HepG2 (cell line): ENCODE measurements at regions of chr5 and their contacts with region 1.

Region 1: DNA sequence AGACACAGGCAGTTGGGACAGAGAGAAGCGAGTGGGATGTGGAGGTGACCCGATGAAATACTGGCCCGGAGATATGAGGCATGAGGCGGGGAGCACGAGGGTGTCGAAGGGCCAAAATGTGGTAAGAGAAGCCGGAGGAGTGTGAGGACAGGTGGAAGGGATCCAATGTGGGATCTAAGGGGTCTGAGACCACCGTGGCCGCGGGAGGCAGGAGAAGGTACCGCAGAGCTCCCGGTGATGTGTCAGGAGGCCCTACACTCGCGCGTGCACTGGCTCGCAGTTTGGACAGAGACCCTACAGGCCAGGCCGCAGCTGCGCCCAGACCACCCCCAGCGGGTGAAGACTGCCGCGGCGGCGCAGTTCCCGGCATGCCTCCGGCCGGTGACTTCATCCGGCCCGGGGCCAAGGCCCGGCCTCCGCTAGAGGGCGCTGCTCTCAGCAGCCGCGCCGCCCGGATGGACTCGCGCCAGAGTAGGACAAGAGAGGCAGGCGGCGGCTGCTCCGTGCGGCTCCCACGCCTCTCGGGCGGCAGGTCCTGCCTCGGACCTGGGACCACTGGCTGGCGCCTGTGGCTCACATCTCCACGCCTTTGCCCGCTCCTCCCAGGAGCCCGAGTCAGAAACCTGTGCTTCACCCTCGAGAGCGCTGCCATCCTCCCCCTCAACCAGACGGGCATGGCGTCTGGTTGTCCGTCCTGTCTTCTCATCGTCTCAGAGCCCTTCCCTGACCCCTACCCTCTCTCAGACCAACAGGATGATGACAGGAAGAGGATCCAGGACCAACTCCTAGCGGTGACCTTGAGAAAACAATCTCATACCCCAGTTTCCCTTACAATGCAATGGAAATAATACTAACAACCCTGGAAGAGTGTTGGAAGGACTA is 35.4 kb upstream of the STING1 start:
- DNase-seq: peak; percentile 80
- ATAC-seq: peak; percentile 91
- H3K4me3 ChIP-seq: peak overlapping the region; percentile 54 to 77 (median 59)
- H3K27ac ChIP-seq: peak overlapping the region; percentile 71
- H3K4me1 ChIP-seq: peaks cover 54% of the 10 kb centered on the region
- H3K27me3 ChIP-seq: no peaks in the 10 kb centered on the region; a peak in 1 of 5 replicates
- CTCF ChIP-seq: peak; percentile 96
- EP300 ChIP-seq: no peak
- POLR2A ChIP-seq: peak; percentile 83 to 89
- RAD21 ChIP-seq: peak; percentile 92

Region 2: DNA sequence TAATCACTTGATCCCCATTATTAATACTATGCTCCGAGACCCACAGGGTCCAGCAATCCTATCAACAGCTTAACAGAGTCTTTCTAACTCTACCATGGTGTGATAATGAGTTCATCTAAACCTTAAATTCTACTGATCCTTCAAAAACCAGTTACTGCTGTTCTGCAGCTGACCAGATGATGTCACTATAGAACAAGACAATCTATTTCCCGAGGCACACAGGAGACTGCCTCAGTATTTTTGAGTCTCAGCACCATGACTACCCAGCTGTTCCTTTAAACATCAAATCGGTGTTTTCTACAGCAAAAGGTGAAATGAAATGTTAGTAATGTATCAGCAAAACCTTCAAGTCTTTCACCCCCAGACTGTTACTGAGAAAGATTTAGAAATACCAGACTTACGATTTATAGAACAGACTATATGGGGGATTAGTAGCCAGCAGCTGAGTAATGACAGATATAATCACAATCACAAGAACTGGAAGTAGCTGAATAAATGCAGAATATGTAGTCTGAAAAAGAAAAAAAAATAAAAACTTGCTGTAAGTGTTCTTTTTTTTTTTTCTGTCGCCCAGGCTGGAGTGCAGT is 95.5 kb before region 1 on chr5:
- CTCF ChIA-PET with region 1: interaction called, 60 read pairs
- POLR2A ChIA-PET with region 1: interaction called, 7 read pairs
- in situ Hi-C with region 1: loop called (anchors 5 kb)
- intact Hi-C with region 1: loop called (anchors 1 kb)
- DNase-seq: peak; percentile 66
- ATAC-seq: peak; percentile 82
- H3K4me3 ChIP-seq: no peak overlapping the region
- H3K27ac ChIP-seq: no peak overlapping the region
- H3K4me1 ChIP-seq: peaks cover 16% of the 10 kb centered on the region
- H3K27me3 ChIP-seq: no peaks in the 10 kb centered on the region
- CTCF ChIP-seq: peak; percentile 89
- EP300 ChIP-seq: no peak
- POLR2A ChIP-seq: no peak
- RAD21 ChIP-seq: peak; percentile 81

Region 3: DNA sequence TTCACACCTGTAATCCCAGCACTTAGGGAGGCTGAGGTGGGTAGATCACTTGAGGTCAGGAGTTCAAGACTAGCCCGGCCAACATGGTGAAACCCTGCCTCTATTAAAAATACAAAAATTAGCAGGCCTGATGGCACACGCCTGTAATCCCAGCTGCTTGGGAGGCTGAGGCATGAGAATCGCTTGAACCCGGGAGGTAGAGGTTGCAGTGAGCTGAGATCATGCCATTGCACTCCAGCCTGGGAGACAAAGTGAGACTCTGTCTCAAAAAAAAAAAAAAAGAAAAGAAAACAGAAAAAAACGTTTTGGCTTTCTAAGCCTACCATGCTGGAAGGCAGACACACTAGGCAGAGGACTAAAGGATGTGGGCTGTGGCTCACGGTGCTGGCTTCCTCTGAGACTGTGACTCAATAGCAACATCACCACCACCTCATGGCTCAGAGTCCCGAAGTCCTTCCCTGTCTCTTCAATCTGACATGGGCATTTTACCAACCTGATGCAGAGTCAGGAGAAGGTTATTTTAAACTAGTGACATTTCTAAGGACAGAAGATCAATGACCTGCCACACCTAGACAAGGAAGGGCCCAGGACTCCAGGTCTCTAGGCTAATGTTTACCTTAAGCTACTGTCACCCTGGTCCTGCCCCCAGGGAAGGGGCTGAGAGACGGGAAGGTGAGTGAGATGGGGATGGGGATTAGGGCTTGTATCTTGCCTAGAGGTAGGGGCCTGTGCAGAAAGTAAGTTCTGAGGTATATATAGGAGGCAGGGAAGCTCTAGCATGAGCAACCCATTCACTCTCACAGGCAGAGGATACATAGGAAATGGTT is 59.1 kb before region 1 on chr5:
- CTCF ChIA-PET with region 1: no interaction called
- POLR2A ChIA-PET with region 1: no interaction called
- in situ Hi-C with region 1: no loop called
- intact Hi-C with region 1: no loop called
- DNase-seq: no peak
- ATAC-seq: peak; percentile 17
- H3K4me3 ChIP-seq: no peak overlapping the region
- H3K27ac ChIP-seq: no peak overlapping the region
- H3K4me1 ChIP-seq: peaks cover 41% of the 10 kb centered on the region
- H3K27me3 ChIP-seq: peaks cover 8 to 41% of the 10 kb centered on the region in 2 experiments
- CTCF ChIP-seq: no peak
- EP300 ChIP-seq: no peak
- POLR2A ChIP-seq: no peak
- RAD21 ChIP-seq: no peak

Region 4: GRCh38 chr5:139551191-139551889 is 33.4 kb after region 1 on chr5:
- CTCF ChIA-PET with region 1: no interaction called
- POLR2A ChIA-PET with region 1: interaction called, 3 read pairs
- in situ Hi-C with region 1: no loop called
- intact Hi-C with region 1: loop called (anchors 1 kb)
- DNase-seq: no peak
- ATAC-seq: peak; percentile 33; the same call in 2 of the 3 replicates
- H3K4me3 ChIP-seq: no peak overlapping the region
- H3K27ac ChIP-seq: peak overlapping the region; percentile 1
- H3K4me1 ChIP-seq: peaks cover 36% of the 10 kb centered on the region
- H3K27me3 ChIP-seq: no peaks in the 10 kb centered on the region
- CTCF ChIP-seq: no peak
- EP300 ChIP-seq: no peak
- POLR2A ChIP-seq: no peak
- RAD21 ChIP-seq: no peak

Region 5: GRCh38 chr5:139872052-139872766 is 354.3 kb after region 1 on chr5:
- CTCF ChIA-PET with region 1: no interaction called
- POLR2A ChIA-PET with region 1: no interaction called
- in situ Hi-C with region 1: no loop called
- intact Hi-C with region 1: no loop called
- DNase-seq: no peak
- ATAC-seq: peak; percentile 60
- H3K4me3 ChIP-seq: no peak overlapping the region
- H3K27ac ChIP-seq: no peak overlapping the region
- H3K4me1 ChIP-seq: no peaks in the 10 kb centered on the region
- H3K27me3 ChIP-seq: peaks cover 5 to 43% of the 10 kb centered on the region in 2 experiments; a peak in 4 of 5 replicates
- CTCF ChIP-seq: peak; percentile 18; the same call in 1 of the 2 replicates
- EP300 ChIP-seq: no peak
- POLR2A ChIP-seq: no peak
- RAD21 ChIP-seq: no peak